Psoas muscle (tissue), 8 donors: ENCODE measurements at regions of chr13 and their contacts with region 1.

Region 1: GRCh38 chr13:72808917-72809500 is 27.1 kb downstream of the PIBF1 start:
- DNase-seq: no peak
- ATAC-seq: no peak
- H3K4me3 ChIP-seq: no peak overlapping the region
- H3K27ac ChIP-seq: no peak overlapping the region
- H3K4me1 ChIP-seq: no peaks in the 10 kb centered on the region
- H3K27me3 ChIP-seq: no peaks in the 10 kb centered on the region
- CTCF ChIP-seq: peak; percentile 66

Region 2: DNA sequence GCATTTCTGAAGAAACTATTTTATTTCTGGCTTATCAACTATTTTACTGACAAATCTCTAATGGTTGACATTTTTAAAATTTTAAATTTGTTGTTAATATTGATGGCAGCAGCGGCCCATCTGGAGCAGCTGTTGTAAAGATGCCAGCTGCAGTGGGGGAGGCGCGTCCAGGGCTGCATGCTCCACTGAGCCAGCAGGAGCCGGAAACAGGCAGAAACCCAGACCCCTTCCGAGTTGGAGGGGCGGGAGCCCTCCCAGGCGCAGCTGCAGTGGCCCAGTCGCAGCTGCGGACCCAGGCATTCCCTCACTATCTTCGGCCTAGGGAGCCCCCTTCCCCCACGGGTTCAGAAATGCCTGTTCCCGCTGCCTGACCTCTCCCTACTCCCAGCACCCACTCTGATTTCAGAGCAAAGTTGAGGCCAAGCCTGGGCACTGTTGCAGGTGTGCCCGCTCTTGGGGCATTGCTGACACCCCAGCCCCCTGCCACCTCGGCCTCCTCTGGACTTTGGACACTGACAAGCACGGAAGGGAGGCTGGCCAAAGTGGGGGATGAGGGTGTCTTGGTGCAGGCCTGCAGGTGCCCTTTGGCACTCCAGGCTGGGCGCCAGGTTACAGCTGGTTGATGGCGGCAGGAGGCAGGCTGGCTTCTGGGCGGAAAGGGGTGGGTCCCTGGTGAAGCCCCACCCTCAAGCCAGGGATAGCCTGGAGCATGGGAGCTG is 42.1 kb after region 1 on chr13:
- intact Hi-C with region 1: no loop called
- DNase-seq: peak in 1 of 2 donors; percentile 39
- ATAC-seq: no peak
- H3K4me3 ChIP-seq: no peak overlapping the region
- H3K27ac ChIP-seq: no peak overlapping the region
- H3K4me1 ChIP-seq: no peaks in the 10 kb centered on the region
- H3K27me3 ChIP-seq: no peaks in the 10 kb centered on the region
- CTCF ChIP-seq: no peak

Region 3: GRCh38 chr13:73230716-73231115 is 421.7 kb after region 1 on chr13:
- intact Hi-C with region 1: no loop called
- DNase-seq: no peak
- ATAC-seq: no peak
- H3K4me3 ChIP-seq: no peak overlapping the region
- H3K27ac ChIP-seq: no peak overlapping the region
- H3K4me1 ChIP-seq: no peaks in the 10 kb centered on the region
- H3K27me3 ChIP-seq: peaks cover 0 to 2% (median 0%) of the 10 kb centered on the region in 3 donors
- CTCF ChIP-seq: no peak

Region 4: DNA sequence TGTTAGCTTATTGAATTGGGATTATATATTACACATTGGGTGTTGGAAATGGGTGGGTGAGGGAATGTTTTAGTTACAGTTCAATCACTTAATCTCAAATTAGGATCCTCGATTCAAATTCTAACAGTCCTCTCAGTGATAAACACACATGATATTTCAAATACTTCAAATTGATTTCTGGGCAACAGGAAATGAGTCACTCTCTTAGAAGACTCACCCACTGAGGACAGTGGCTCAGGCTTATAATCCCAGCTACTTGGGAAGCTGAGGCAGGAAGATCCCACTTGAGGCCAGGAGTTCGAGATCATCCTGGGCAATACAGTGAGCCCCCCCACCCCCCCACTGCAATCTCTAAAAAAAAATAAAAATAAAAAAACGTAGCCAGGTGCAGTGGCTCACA is 889.9 kb after region 1 on chr13:
- intact Hi-C with region 1: loop called in 1 of 2 experiments (anchors 5 kb)
- DNase-seq: no peak
- ATAC-seq: no peak
- H3K4me3 ChIP-seq: no peak overlapping the region
- H3K27ac ChIP-seq: no peak overlapping the region
- H3K4me1 ChIP-seq: no peaks in the 10 kb centered on the region
- H3K27me3 ChIP-seq: no peaks in the 10 kb centered on the region
- CTCF ChIP-seq: no peak

Region 5: GRCh38 chr13:73715114-73715910 is 906.3 kb after region 1 on chr13:
- intact Hi-C with region 1: loop called in 1 of 2 experiments (anchors 10 kb)
- DNase-seq: no peak
- ATAC-seq: no peak
- H3K4me3 ChIP-seq: no peak overlapping the region
- H3K27ac ChIP-seq: no peak overlapping the region
- H3K4me1 ChIP-seq: no peaks in the 10 kb centered on the region
- H3K27me3 ChIP-seq: no peaks in the 10 kb centered on the region
- CTCF ChIP-seq: no peak